ENCODE measurements at regions of chr7 and their contacts with region 1.

Region 1: GRCh38 chr7:100407285-100408180 is 21.0 kb downstream of the ZCWPW1 start:
- DNase-seq: peak in 7 of 9 donors; percentile 35 to 69 (median 53)
- ATAC-seq: peak; percentile 97
- H3K4me3 ChIP-seq: no peak overlapping the region
- H3K4me3 Mint-ChIP-seq: no peak overlapping the region
- H3K27ac ChIP-seq: no peak overlapping the region
- H3K27ac Mint-ChIP-seq: peak overlapping the region in 1 of 9 donors; percentile 65
- H3K4me1 ChIP-seq: no peaks in the 10 kb centered on the region
- H3K4me1 Mint-ChIP-seq: peaks cover 0 to 5% (median 2%) of the 10 kb centered on the region in 7 donors
- H3K27me3 ChIP-seq: no peaks in the 10 kb centered on the region
- H3K27me3 Mint-ChIP-seq: peaks cover 0 to 32% (median 0%) of the 10 kb centered on the region in 5 donors

Region 2: GRCh38 chr7:99459087-99459486 is 948.4 kb before region 1 on chr7:
- CTCF ChIA-PET with region 1: no interaction called
- POLR2A ChIA-PET with region 1: no interaction called
- intact Hi-C with region 1: no loop called
- DNase-seq: peak in 2 of 9 donors; percentile 11 to 23
- ATAC-seq: peak; percentile 66
- H3K4me3 ChIP-seq: no peak overlapping the region
- H3K4me3 Mint-ChIP-seq: no peak overlapping the region
- H3K27ac ChIP-seq: peak overlapping the region; percentile 17
- H3K27ac Mint-ChIP-seq: peak overlapping the region in 3 of 9 donors; percentile 55 to 85 (median 63)
- H3K4me1 ChIP-seq: peaks cover 0 to 4% of the 10 kb centered on the region in 2 donors
- H3K4me1 Mint-ChIP-seq: peaks cover 14 to 46% (median 25%) of the 10 kb centered on the region in 7 donors
- H3K27me3 ChIP-seq: no peaks in the 10 kb centered on the region
- H3K27me3 Mint-ChIP-seq: no peaks in the 10 kb centered on the region

Region 3: DNA sequence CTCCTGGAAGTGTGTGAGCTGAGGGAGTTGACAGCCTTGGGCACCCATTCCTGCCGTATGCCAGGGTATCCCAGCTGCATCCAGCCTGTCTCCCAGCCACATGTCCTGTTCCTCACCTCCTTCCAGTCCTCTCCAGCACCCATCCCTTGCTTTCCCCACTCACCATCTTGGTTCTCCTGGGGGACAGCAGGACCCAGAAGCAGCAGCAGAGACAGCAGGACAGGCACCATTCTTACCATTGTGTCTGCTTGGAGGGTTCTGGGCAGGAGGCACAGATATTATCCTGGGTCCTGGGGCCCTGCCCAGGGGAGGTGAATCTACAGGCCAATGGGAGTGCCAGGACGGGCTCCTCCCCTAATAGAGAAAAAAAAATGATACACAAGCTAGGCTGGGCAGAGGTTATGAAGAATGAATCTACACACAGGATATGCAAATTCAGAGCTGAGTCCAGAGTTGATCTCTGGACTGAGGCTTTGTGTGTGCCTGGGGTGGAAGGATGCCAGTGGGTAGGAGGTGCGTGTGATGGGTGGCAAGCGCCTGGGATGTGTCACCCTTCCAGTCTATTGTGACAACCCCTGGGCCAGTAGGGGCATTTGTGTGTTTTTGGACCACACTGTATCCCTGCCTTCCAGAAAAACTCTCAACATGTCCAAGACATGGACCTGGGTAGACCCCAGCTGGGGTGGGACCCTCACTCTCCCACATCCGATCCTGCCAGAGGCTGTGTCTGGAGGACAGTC is 431.6 kb before region 1 on chr7 and contains the start of gene AZGP1:
- CTCF ChIA-PET with region 1: interaction called, 4 read pairs
- POLR2A ChIA-PET with region 1: no interaction called
- intact Hi-C with region 1: loop called in 1 of 2 experiments (anchors 2 kb)
- DNase-seq: no peak
- ATAC-seq: no peak
- H3K4me3 ChIP-seq: no peak within 1 kb of the TSS
- H3K4me3 Mint-ChIP-seq: no peak within 1 kb of the TSS
- H3K27ac ChIP-seq: no peak within 1 kb of the TSS
- H3K27ac Mint-ChIP-seq: no peak within 1 kb of the TSS
- H3K4me1 ChIP-seq: no peaks in the 10 kb centered on the region
- H3K4me1 Mint-ChIP-seq: peaks cover 0 to 12% (median 5%) of the 10 kb centered on the region in 7 donors
- H3K27me3 ChIP-seq: no peaks in the 10 kb centered on the region
- H3K27me3 Mint-ChIP-seq: peaks cover 0 to 22% (median 3%) of the 10 kb centered on the region in 5 donors
- total RNA-seq, gene AZGP1: not detected

Region 4: DNA sequence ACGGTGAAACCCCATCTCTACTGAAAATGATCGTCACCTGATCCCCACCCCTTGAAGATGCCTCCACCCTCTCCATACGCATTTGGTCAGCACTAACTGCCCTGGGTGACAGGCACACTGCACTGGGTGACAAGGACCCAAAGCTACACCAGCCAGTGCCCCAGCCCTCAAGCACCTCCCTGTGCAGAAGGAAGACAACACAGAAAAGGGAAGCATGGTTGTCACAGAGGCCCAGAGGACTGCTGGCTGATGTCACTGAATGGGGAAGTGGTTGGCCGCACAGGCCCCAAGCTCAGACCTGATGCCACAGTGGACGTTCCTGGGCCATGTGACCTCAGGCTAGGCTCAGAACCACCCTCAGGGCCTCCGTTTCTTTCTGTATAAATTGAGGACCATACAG is 38.4 kb before region 1 on chr7:
- CTCF ChIA-PET with region 1: no interaction called
- POLR2A ChIA-PET with region 1: no interaction called
- intact Hi-C with region 1: loop called (anchors 2 to 5 kb)
- DNase-seq: no peak
- ATAC-seq: peak; percentile 85
- H3K4me3 ChIP-seq: no peak overlapping the region
- H3K4me3 Mint-ChIP-seq: peak overlapping the region in 1 of 10 donors; percentile 22
- H3K27ac ChIP-seq: peak overlapping the region; percentile 25
- H3K27ac Mint-ChIP-seq: peak overlapping the region in 6 of 9 donors; percentile 50 to 82 (median 66)
- H3K4me1 ChIP-seq: peaks cover 0 to 8% of the 10 kb centered on the region in 2 donors
- H3K4me1 Mint-ChIP-seq: peaks cover 13 to 45% (median 31%) of the 10 kb centered on the region in 7 donors
- H3K27me3 ChIP-seq: no peaks in the 10 kb centered on the region
- H3K27me3 Mint-ChIP-seq: no peaks in the 10 kb centered on the region